ENCODE measurements at regions of chr18 and their contacts with region 1.

Region 1: DNA sequence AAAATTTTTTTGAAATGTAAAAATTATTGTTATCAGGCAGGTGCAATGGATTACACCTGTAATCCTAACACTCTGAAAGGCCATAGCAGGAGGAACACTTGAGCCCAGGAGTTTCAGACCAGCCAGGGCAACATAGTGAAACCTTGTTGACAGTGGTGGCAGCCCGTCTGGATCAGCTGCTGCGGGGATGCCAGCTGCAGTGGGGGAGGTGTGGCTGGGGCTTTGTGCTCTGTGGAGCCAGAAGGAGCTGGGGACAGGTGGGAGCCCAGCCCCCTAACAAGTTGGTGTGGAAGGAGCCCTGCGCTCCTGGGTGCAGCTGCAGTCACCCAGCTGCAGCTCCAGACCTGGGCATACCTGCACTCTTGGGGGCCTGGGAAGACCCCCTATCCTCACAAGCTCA is 182.4 kb upstream of the MC4R start:
- DNase-seq: no peak
- H3K4me3 Mint-ChIP-seq: no peak overlapping the region
- H3K27ac Mint-ChIP-seq: no peak overlapping the region
- H3K4me1 Mint-ChIP-seq: no peaks in the 10 kb centered on the region
- H3K27me3 Mint-ChIP-seq: no peaks in the 10 kb centered on the region

Region 2: GRCh38 chr18:59800897-59801296 is 754.1 kb before region 1 on chr18:
- CTCF ChIA-PET with region 1: no interaction called
- POLR2A ChIA-PET with region 1: interaction called, 10 read pairs
- DNase-seq: no peak
- H3K4me3 Mint-ChIP-seq: no peak overlapping the region
- H3K27ac Mint-ChIP-seq: no peak overlapping the region
- H3K4me1 Mint-ChIP-seq: peaks cover 14% of the 10 kb centered on the region
- H3K27me3 Mint-ChIP-seq: peaks cover 4% of the 10 kb centered on the region

Region 3: DNA sequence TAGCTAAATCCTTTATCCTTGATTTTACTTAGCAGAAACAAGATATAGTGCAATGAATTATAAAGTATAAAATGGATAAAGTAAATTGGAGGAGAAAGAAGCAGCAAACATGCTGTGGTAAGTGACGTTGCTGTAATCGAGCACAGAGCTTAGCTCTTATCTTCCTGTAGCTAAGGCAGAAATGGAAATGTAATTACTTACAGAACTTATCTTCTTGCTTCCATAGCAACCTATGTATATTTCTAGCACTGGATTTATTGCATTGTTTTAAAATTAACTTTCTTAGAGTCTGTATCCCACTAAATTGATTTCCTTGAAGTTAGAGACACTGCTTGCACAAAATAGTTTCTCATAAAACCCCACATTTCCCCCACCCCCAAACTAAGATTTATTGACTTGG is 51.8 kb before region 1 on chr18:
- CTCF ChIA-PET with region 1: no interaction called
- POLR2A ChIA-PET with region 1: no interaction called
- DNase-seq: no peak
- H3K4me3 Mint-ChIP-seq: no peak overlapping the region
- H3K27ac Mint-ChIP-seq: no peak overlapping the region
- H3K4me1 Mint-ChIP-seq: no peaks in the 10 kb centered on the region
- H3K27me3 Mint-ChIP-seq: peaks cover 2% of the 10 kb centered on the region

Measured in activated CD4-positive, alpha-beta T cell treated with anti-CD3 and anti-CD28 coated beads, Interleukin-2, amount 10 ng/mL, durations not matched to agents 7 days and 5 days (primary cell).